ENCODE measurements at regions of chr16 and their contacts with region 1.

Region 1: DNA sequence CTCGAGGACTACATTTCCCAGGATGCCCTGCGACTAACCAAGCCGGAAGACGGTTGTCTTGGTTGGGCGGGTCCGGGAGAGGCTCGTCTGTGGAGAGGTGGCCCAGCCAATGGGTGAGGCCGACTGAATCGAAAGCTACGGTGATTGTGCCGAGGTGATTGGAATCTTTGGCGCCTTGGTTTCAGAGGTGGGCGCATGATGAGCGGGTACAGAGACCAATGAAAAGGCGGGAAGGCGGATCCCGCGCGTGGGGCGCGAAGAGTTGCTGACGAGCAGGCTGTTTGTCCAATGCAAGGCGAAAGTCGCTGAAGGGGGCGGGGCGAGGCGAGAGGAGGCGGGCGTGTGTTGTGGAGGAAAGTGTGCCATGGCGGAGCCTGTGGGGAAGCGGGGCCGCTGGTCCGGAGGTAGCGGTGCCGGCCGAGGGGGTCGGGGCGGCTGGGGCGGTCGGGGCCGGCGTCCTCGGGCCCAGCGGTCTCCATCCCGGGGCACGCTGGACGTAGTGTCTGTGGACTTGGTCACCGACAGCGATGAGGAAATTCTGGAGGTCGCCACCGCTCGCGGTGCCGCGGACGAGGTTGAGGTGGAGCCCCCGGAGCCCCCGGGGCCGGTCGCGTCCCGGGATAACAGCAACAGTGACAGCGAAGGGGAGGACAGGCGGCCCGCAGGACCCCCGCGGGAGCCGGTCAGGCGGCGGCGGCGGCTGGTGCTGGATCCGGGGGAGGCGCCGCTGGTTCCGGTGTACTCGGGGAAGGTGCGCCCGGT is at the start of gene NFATC2IP:
- DNase-seq: peak; percentile 98 to 100 (median 99)
- ATAC-seq: peak; percentile 93 to 96 (median 94)
- H3K4me3 ChIP-seq: peak within 1 kb of the TSS; percentile 73 to 74
- H3K4me3 Mint-ChIP-seq: peak within 1 kb of the TSS; percentile 92 to 96 (median 96)
- H3K27ac ChIP-seq: peak within 1 kb of the TSS; percentile 47
- H3K27ac Mint-ChIP-seq: peak within 1 kb of the TSS; percentile 91 to 93
- H3K4me1 ChIP-seq: peaks cover 10 to 36% of the 10 kb centered on the region in 2 experiments
- H3K4me1 Mint-ChIP-seq: peaks cover 31 to 36% (median 33%) of the 10 kb centered on the region in 3 donors
- H3K27me3 ChIP-seq: no peaks in the 10 kb centered on the region
- H3K27me3 Mint-ChIP-seq: no peaks in the 10 kb centered on the region
- total RNA-seq, gene NFATC2IP: 78.5 to 111 (median 100) TPM

Region 2: DNA sequence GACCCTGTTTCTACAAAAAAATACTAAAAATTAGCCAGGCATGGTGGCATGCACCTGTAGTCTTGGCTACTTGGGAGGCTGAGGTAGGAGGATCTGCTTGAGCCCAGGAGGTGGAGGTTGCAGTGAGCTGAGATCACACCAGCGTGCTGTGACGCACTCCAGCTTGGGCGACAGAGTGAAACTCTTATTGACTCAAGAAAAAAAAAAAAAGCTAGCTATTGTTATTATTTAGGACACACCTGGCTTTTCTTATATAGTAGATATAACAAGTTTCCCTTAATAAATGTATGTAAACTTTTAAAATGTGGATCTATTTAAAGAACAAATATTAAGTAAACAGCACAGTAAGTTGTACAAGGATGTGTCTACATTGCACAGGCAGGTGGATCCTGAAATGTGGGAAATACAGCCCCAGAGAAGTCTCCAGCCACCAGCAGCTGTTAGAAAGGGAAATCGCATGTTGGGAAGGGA is 27.6 kb before region 1 on chr16:
- CTCF ChIA-PET with region 1: no interaction called
- POLR2A ChIA-PET with region 1: no interaction called
- DNase-seq: no peak
- ATAC-seq: no peak
- H3K4me3 ChIP-seq: no peak overlapping the region
- H3K4me3 Mint-ChIP-seq: peak overlapping the region; percentile 63 to 96 (median 92)
- H3K27ac ChIP-seq: no peak overlapping the region
- H3K27ac Mint-ChIP-seq: peak overlapping the region; percentile 77 to 88
- H3K4me1 ChIP-seq: peaks cover 2 to 12% of the 10 kb centered on the region in 2 experiments
- H3K4me1 Mint-ChIP-seq: peaks cover 14 to 25% (median 16%) of the 10 kb centered on the region in 3 donors
- H3K27me3 ChIP-seq: no peaks in the 10 kb centered on the region
- H3K27me3 Mint-ChIP-seq: no peaks in the 10 kb centered on the region

Region 3: DNA sequence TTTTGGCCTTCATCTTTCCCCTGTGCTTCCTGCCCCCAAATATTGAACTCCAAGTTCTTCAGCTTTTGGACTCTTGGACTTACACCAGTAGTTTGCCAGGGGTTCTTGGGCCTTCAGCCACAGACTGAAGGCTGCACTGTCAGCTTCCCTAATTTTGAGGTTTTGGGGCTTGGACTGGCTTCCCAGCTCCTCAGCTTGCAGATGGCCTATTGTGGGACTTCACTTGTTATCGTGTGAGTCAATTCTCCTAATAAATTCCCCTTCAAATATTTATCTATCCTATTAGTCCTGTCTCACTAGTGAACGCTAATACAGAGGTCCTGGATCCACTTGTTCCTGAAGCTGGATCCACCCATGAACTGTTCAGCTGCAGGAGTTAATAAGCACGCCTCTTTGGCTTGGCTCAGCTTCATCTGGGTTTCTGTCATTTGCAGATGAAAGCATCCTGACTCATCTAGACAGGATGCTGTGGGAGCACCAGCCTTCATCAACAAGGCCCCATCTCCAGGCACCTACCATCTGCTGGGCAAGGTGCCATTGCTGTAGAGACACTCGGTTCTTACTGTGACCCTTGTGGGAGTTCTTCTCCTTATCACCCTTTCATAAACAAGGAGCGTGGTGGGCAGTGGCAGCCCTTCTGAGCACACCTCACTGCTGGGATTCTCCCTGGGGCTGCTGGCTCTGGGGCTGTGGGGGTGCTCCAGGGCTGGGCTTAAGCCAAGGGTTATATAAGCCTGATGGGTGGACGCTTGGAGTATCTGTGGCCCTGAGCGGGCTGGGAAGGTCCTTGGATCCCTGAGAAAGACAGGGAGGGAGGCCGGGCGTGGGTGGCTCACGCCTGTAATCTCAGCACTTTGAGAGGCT is 57.1 kb after region 1 on chr16:
- CTCF ChIA-PET with region 1: interaction called in 1 of 2 experiments, 10 read pairs
- POLR2A ChIA-PET with region 1: no interaction called
- DNase-seq: peak; percentile 42 to 76 (median 62)
- ATAC-seq: peak; percentile 77 to 89 (median 87)
- H3K4me3 ChIP-seq: no peak overlapping the region
- H3K4me3 Mint-ChIP-seq: peak overlapping the region; percentile 31 to 74 (median 61)
- H3K27ac ChIP-seq: peak overlapping the region; percentile 72
- H3K27ac Mint-ChIP-seq: peak overlapping the region; percentile 95 to 98
- H3K4me1 ChIP-seq: peaks cover 35 to 58% of the 10 kb centered on the region in 2 experiments
- H3K4me1 Mint-ChIP-seq: peaks cover 59 to 70% (median 64%) of the 10 kb centered on the region in 3 donors
- H3K27me3 ChIP-seq: no peaks in the 10 kb centered on the region
- H3K27me3 Mint-ChIP-seq: no peaks in the 10 kb centered on the region

Region 4: GRCh38 chr16:29107299-29107698 is 156.5 kb after region 1 on chr16:
- CTCF ChIA-PET with region 1: no interaction called
- POLR2A ChIA-PET with region 1: no interaction called
- DNase-seq: no peak
- ATAC-seq: no peak
- H3K4me3 ChIP-seq: no peak overlapping the region
- H3K4me3 Mint-ChIP-seq: no peak overlapping the region
- H3K27ac ChIP-seq: no peak overlapping the region
- H3K27ac Mint-ChIP-seq: no peak overlapping the region
- H3K4me1 ChIP-seq: peaks cover 3 to 13% of the 10 kb centered on the region in 2 experiments
- H3K4me1 Mint-ChIP-seq: peaks cover 4 to 17% (median 13%) of the 10 kb centered on the region in 3 donors
- H3K27me3 ChIP-seq: no peaks in the 10 kb centered on the region
- H3K27me3 Mint-ChIP-seq: no peaks in the 10 kb centered on the region

Region 5: GRCh38 chr16:29926005-29926710 is 975.3 kb after region 1 on chr16 and contains the start of gene KCTD13:
- CTCF ChIA-PET with region 1: no interaction called
- POLR2A ChIA-PET with region 1: no interaction called
- DNase-seq: peak; percentile 59 to 98 (median 82)
- ATAC-seq: peak; percentile 91 to 92 (median 92)
- H3K4me3 ChIP-seq: peak within 1 kb of the TSS; percentile 87 to 88
- H3K4me3 Mint-ChIP-seq: peak within 1 kb of the TSS; percentile 87 to 91 (median 90)
- H3K27ac ChIP-seq: peak within 1 kb of the TSS; percentile 85
- H3K27ac Mint-ChIP-seq: peak within 1 kb of the TSS; percentile 94 to 97
- H3K4me1 ChIP-seq: peaks cover 15 to 28% of the 10 kb centered on the region in 2 experiments
- H3K4me1 Mint-ChIP-seq: peaks cover 36 to 45% (median 40%) of the 10 kb centered on the region in 3 donors
- H3K27me3 ChIP-seq: no peaks in the 10 kb centered on the region
- H3K27me3 Mint-ChIP-seq: no peaks in the 10 kb centered on the region
- total RNA-seq, gene KCTD13: 48.4 to 87.3 (median 79.1) TPM